A549 (cell line): ENCODE measurements at regions of chr11 and their contacts with region 1.

Region 1: DNA sequence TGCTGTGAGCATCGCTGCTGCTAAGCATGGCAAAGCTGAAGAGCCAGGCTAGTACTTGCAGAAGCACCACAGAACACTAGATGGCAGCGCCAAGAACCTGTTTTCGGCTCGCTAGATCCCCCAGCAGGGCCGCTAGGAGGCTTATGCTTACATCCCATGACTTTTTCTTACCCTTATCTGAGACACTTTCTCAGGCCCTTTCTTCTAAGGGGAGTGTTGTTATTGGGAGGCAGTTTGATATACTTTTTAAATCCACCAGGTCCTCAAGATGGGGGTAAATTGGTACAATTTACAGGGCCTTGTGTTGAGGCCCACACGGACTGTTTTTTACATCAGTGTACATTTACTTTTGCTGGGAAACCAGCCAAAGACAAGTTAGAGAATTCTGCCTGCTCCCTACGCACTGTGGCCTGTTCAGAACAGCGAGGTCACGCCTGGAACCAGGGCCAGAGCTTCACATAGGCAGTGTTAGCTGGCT is 4.0 kb downstream of the TRIM6 start:
- DNase-seq: peak; percentile 66 to 92
- ATAC-seq: peak; percentile 80 to 88
- H3K4me3 ChIP-seq: no peak overlapping the region
- H3K27ac ChIP-seq: peak overlapping the region; percentile 68 to 79
- H3K4me1 ChIP-seq: peaks cover 52% of the 10 kb centered on the region
- CTCF ChIP-seq: peak; percentile 90
- EP300 ChIP-seq: no peak
- POLR2A ChIP-seq: no peak
- RAD21 ChIP-seq: peak; percentile 79 to 85

Region 2: GRCh38 chr11:5611627-5612026 is 11.2 kb after region 1 on chr11:
- CTCF ChIA-PET with region 1: interaction called, 50 read pairs
- POLR2A ChIA-PET with region 1: interaction called, 3 read pairs
- DNase-seq: peak in 1 of 2 experiments; percentile 38
- ATAC-seq: peak; percentile 73 to 86; a peak in 5 of 6 replicates
- H3K4me3 ChIP-seq: no peak overlapping the region
- H3K27ac ChIP-seq: no peak overlapping the region
- H3K4me1 ChIP-seq: peaks cover 7% of the 10 kb centered on the region; the same call in 1 of the 3 replicates
- CTCF ChIP-seq: peak; percentile 38
- EP300 ChIP-seq: no peak
- POLR2A ChIP-seq: no peak
- RAD21 ChIP-seq: peak in 1 of 2 experiments; percentile 38; a peak in 3 of 5 replicates

Region 3: GRCh38 chr11:5620646-5621521 is 20.5 kb after region 1 on chr11:
- CTCF ChIA-PET with region 1: interaction called, 50 read pairs
- POLR2A ChIA-PET with region 1: interaction called, 13 read pairs
- DNase-seq: peak; percentile 80 to 91
- ATAC-seq: peak; percentile 90 to 92
- H3K4me3 ChIP-seq: peak overlapping the region; percentile 17; the same call in 2 of the 3 replicates
- H3K27ac ChIP-seq: peak overlapping the region; percentile 79 to 91
- H3K4me1 ChIP-seq: peaks cover 58% of the 10 kb centered on the region
- CTCF ChIP-seq: no peak
- EP300 ChIP-seq: peak in 1 of 2 experiments; percentile 46; a peak in 1 of 5 replicates
- POLR2A ChIP-seq: no peak
- RAD21 ChIP-seq: no peak; a peak in 1 of 5 replicates

Region 4: GRCh38 chr11:5684646-5685362 is 84.4 kb after region 1 on chr11 and contains the start of gene TRIM5:
- CTCF ChIA-PET with region 1: interaction called, 34 read pairs
- POLR2A ChIA-PET with region 1: interaction called, 10 read pairs
- DNase-seq: peak; percentile 94 to 97
- ATAC-seq: peak; percentile 99
- H3K4me3 ChIP-seq: peak within 1 kb of the TSS; percentile 47
- H3K27ac ChIP-seq: peak within 1 kb of the TSS; percentile 88 to 90
- H3K4me1 ChIP-seq: peaks cover 15% of the 10 kb centered on the region; the same call in 2 of the 3 replicates
- CTCF ChIP-seq: peak; percentile 72
- EP300 ChIP-seq: no peak
- POLR2A ChIP-seq: peak; percentile 54
- RAD21 ChIP-seq: peak; percentile 63 to 67
- polyA plus RNA-seq, gene TRIM5: 30.5 and 32.6 TPM in 2 replicates

Region 5: DNA sequence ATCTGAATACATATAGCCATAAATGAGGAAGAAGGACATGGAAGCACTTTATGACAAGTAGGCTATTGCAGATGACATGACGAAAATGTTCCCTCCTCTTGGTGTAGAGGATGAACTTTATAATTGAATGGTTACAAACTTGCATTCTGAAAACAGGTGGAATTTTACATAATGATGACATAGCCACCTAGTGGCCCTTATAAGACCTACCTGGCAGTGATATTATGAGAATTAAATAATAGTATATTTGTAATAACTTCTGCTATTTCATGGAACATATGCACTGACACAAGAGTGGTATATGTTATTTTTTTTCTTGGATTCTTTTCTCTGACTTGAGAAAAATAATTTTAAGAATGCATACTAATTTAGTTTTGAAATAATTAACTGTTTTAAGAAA is 112.1 kb after region 1 on chr11:
- CTCF ChIA-PET with region 1: interaction called, 17 read pairs
- POLR2A ChIA-PET with region 1: no interaction called
- DNase-seq: peak; percentile 18 to 19
- ATAC-seq: peak in 1 of 2 experiments; percentile 68; a peak in 4 of 6 replicates
- H3K4me3 ChIP-seq: no peak overlapping the region
- H3K27ac ChIP-seq: no peak overlapping the region
- H3K4me1 ChIP-seq: no peaks in the 10 kb centered on the region
- CTCF ChIP-seq: peak; percentile 58
- EP300 ChIP-seq: no peak
- POLR2A ChIP-seq: no peak
- RAD21 ChIP-seq: peak; percentile 68 to 70

Region 6: DNA sequence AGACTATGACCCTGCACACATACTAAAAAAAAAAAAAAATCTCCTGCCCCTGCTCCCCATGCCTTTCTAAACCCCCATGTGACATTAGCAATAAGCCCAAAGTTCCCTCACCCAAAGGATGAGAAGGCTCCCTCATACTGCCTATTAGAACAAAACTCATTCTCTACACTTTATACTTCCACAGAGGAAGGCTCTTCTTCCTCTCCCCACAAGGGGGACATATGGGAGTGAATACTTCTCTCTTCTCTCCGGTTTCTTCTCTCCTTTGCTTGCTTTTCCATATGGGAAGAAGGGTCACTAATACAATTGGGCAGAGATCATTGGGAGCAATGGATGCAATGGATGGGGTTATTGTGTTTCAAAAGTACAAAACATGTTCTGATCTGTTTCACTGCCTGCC is 383.0 kb after region 1 on chr11:
- CTCF ChIA-PET with region 1: no interaction called
- POLR2A ChIA-PET with region 1: no interaction called
- DNase-seq: no peak
- ATAC-seq: peak; percentile 30 to 36; a peak in 1 of 6 replicates
- H3K4me3 ChIP-seq: no peak overlapping the region
- H3K27ac ChIP-seq: no peak overlapping the region
- H3K4me1 ChIP-seq: no peaks in the 10 kb centered on the region
- CTCF ChIP-seq: no peak
- EP300 ChIP-seq: no peak
- POLR2A ChIP-seq: no peak
- RAD21 ChIP-seq: no peak